Endothelial cell of umbilical vein (primary cell): ENCODE measurements at regions of chr17 and their contacts with region 1.

Region 1: DNA sequence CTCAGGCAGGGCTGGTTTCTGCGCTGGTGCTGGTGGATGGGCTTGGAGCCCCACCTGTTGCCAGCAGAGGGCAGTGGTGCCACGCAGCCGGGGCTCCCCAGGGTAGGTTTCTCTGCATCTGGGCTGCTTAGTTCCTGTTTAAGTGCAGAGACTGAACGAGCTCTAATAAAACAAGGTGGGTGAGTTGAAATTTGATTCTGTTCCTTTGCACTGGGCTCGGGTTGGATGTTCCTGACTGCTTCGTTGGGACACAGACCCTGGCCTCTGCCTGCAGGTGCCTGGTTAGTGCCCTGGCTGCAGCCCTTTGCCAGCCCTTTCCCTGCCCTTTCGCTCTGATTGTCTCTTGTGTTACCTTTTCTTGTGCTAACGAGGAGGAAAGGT is 30.0 kb downstream of the TBCD start:
- DNase-seq: peak; percentile 75
- H3K4me3 ChIP-seq: no peak overlapping the region
- H3K27ac ChIP-seq: no peak overlapping the region
- H3K4me1 ChIP-seq: peaks cover 2% of the 10 kb centered on the region
- H3K27me3 ChIP-seq: no peaks in the 10 kb centered on the region
- CTCF ChIP-seq: peak; percentile 97 to 98
- POLR2A ChIP-seq: no peak

Region 2: GRCh38 chr17:82804442-82805191 is 22.7 kb after region 1 on chr17:
- CTCF ChIA-PET with region 1: interaction called, 13 read pairs
- POLR2A ChIA-PET with region 1: no interaction called
- dilution Hi-C with region 1: no loop called
- intact Hi-C with region 1: no loop called
- DNase-seq: peak; percentile 9
- H3K4me3 ChIP-seq: no peak overlapping the region
- H3K27ac ChIP-seq: no peak overlapping the region
- H3K4me1 ChIP-seq: peaks cover 7% of the 10 kb centered on the region
- H3K27me3 ChIP-seq: no peaks in the 10 kb centered on the region
- CTCF ChIP-seq: no peak
- POLR2A ChIP-seq: no peak

Region 3: DNA sequence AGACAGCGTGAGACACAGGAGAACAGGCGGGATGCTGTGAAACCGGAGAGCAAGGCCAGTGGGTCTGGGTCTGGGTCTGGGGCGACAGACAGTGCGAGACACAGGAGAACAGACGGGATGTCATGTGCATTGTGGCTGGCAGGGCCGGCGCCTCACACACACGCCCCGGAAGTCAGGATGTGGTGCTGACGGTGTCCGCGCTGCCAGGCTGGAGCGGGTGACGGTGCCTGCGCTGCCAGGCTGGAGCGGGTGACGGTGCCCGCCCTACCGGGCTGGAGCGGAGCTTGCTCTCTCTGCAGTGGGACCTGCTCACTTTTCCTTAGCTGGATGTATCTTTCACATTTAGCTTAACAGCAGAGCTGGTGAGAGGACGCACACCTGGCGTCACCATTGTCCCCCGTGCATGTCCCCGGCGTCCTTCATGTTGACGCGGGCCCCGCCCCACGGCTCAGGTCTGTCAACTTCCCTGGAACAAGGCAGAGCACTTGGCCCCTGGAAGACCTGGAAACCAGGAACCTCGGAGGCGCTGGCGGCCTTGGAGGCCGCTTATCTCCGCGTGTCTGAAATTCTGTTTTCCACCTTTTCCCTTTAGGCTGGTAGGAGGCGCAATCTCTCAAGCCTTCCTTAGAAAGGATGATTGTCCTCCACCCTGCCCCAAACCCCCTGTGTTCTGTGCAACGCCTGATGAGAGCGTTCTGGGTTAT is 101.0 kb after region 1 on chr17:
- CTCF ChIA-PET with region 1: interaction called, 15 read pairs
- POLR2A ChIA-PET with region 1: no interaction called
- dilution Hi-C with region 1: no loop called
- intact Hi-C with region 1: no loop called
- DNase-seq: no peak
- H3K4me3 ChIP-seq: no peak overlapping the region
- H3K27ac ChIP-seq: no peak overlapping the region
- H3K4me1 ChIP-seq: peaks cover 14% of the 10 kb centered on the region
- H3K27me3 ChIP-seq: no peaks in the 10 kb centered on the region
- CTCF ChIP-seq: no peak
- POLR2A ChIP-seq: no peak

Region 4: GRCh38 chr17:82917691-82918345 is 135.9 kb after region 1 on chr17:
- CTCF ChIA-PET with region 1: interaction called, 176 read pairs
- POLR2A ChIA-PET with region 1: no interaction called
- dilution Hi-C with region 1: no loop called
- intact Hi-C with region 1: loop called (anchors 1 kb)
- DNase-seq: peak; percentile 21
- H3K4me3 ChIP-seq: no peak overlapping the region
- H3K27ac ChIP-seq: no peak overlapping the region
- H3K4me1 ChIP-seq: no peaks in the 10 kb centered on the region
- H3K27me3 ChIP-seq: no peaks in the 10 kb centered on the region
- CTCF ChIP-seq: peak; percentile 41 to 65
- POLR2A ChIP-seq: no peak

Region 5: GRCh38 chr17:82962864-82963684 is 181.2 kb after region 1 on chr17:
- CTCF ChIA-PET with region 1: interaction called, 9 read pairs
- POLR2A ChIA-PET with region 1: no interaction called
- dilution Hi-C with region 1: no loop called
- intact Hi-C with region 1: loop called (anchors 5 kb)
- DNase-seq: peak; percentile 76
- H3K4me3 ChIP-seq: no peak overlapping the region
- H3K27ac ChIP-seq: no peak overlapping the region
- H3K4me1 ChIP-seq: peaks cover 9% of the 10 kb centered on the region
- H3K27me3 ChIP-seq: no peaks in the 10 kb centered on the region
- CTCF ChIP-seq: peak; percentile 72 to 91
- POLR2A ChIP-seq: no peak